SK-N-SH (cell line): ENCODE measurements at regions of chr21 and their contacts with region 1.

Region 1: GRCh38 chr21:37675202-37675801 is 241.0 kb downstream of the KCNJ6 start:
- DNase-seq: peak; percentile 80
- H3K4me3 ChIP-seq: peak overlapping the region in 1 of 2 experiments; percentile 34; a peak in 2 of 4 replicates
- H3K27ac ChIP-seq: no peak overlapping the region
- H3K4me1 ChIP-seq: no peaks in the 10 kb centered on the region; a peak in 1 of 4 replicates
- H3K27me3 ChIP-seq: peaks cover 23% of the 10 kb centered on the region; the same call in 1 of the 2 replicates
- CTCF ChIP-seq: peak; percentile 96
- EP300 ChIP-seq: no peak
- RAD21 ChIP-seq: peak; percentile 65

Region 2: GRCh38 chr21:37658817-37659458 is 16.4 kb before region 1 on chr21:
- CTCF ChIA-PET with region 1: interaction called, 15 read pairs
- POLR2A ChIA-PET with region 1: no interaction called
- DNase-seq: no peak
- H3K4me3 ChIP-seq: no peak overlapping the region
- H3K27ac ChIP-seq: no peak overlapping the region
- H3K4me1 ChIP-seq: no peaks in the 10 kb centered on the region
- H3K27me3 ChIP-seq: peaks cover 9% of the 10 kb centered on the region; the same call in 1 of the 2 replicates
- CTCF ChIP-seq: no peak
- EP300 ChIP-seq: no peak
- RAD21 ChIP-seq: no peak

Region 3: GRCh38 chr21:37695111-37695510 is 19.8 kb after region 1 on chr21:
- CTCF ChIA-PET with region 1: interaction called, 25 read pairs
- POLR2A ChIA-PET with region 1: no interaction called
- DNase-seq: no peak
- H3K4me3 ChIP-seq: no peak overlapping the region
- H3K27ac ChIP-seq: no peak overlapping the region
- H3K4me1 ChIP-seq: no peaks in the 10 kb centered on the region; a peak in 1 of 4 replicates
- H3K27me3 ChIP-seq: peaks cover 17% of the 10 kb centered on the region; the same call in 1 of the 2 replicates
- CTCF ChIP-seq: no peak
- EP300 ChIP-seq: no peak
- RAD21 ChIP-seq: no peak

Region 4: DNA sequence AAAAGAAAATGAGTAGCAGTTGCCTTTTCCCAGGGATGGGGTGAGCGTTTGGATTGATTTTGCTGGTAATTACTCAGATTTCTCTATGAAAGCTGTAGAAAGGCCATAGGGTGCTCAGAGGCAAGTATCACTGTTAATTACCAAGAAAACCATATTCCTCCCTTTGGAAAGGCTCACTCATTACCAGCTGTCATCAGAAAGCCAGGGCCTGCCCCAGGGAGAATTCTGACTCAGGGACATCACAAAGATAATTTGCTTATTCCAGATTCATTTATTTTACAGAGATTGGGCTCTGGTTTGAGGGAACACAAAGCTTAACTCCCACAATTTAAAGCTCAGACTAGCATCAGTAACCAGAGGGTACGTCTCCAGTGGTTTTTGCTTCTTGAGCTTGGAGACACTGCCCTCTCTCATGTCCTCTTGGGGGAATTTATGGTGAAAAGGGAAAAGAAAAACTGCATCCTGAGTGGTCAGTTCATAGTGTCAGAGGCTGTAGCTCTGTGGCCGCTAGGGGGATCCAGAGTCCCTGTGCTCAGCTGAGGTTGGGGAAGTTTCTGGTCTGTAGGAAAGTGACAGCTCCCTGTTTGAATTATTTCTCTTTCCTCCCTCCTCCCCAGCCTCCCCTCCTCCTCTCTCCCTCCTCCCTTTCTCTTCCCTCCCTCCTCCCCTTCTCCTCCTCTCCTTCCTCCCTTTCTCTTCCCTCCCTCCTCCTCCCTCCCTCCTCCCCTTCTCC is 36.7 kb after region 1 on chr21:
- CTCF ChIA-PET with region 1: interaction called, 15 read pairs
- POLR2A ChIA-PET with region 1: no interaction called
- DNase-seq: peak; percentile 64
- H3K4me3 ChIP-seq: no peak overlapping the region; a peak in 1 of 4 replicates
- H3K27ac ChIP-seq: peak overlapping the region in 1 of 2 experiments; percentile 22; a peak in 1 of 4 replicates
- H3K4me1 ChIP-seq: peaks cover 0 to 15% of the 10 kb centered on the region in 2 experiments; a peak in 1 of 4 replicates
- H3K27me3 ChIP-seq: no peaks in the 10 kb centered on the region
- CTCF ChIP-seq: peak; percentile 79
- EP300 ChIP-seq: peak in 1 of 2 experiments; percentile 2; a peak in 1 of 4 replicates
- RAD21 ChIP-seq: peak; percentile 77

Region 5: DNA sequence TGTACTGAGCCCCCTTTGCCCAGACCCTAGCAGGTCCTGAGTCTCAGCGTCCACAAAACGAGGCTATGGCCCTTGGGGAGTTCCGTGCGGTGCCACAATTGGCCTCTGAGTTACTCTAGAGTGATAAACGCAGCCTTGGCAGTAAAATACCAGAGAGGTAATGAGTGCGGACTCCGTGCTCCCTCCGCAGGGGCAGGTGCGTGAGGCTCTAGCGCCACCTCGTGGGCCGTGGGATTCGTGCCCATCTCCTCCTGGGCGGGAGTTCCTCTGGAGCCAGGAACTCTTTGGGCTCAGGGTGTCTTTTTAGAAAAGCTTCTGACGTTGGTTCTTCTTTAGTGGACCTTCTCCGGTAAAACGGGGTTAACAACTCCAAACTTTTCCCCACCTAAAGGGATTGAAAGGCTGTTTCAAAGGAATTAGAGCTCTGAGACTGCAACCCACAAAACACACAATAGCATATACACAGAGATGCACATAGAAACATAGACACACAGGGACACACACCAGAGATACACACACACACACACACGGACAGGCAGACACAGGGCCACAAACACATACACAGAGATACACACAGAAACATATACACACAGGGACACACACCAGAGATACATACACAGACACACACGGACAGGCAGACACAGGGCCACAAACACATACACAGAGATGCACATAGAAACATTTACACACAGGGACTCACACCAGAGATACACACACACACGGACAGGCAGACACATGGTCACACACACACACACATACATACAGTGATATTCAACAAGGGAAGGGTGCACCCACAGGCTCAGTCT is 680.9 kb after region 1 on chr21:
- CTCF ChIA-PET with region 1: interaction called, 10 read pairs
- POLR2A ChIA-PET with region 1: no interaction called
- DNase-seq: peak; percentile 85
- H3K4me3 ChIP-seq: peak overlapping the region in 1 of 2 experiments; percentile 25; a peak in 1 of 4 replicates
- H3K27ac ChIP-seq: no peak overlapping the region
- H3K4me1 ChIP-seq: no peaks in the 10 kb centered on the region; a peak in 1 of 4 replicates
- H3K27me3 ChIP-seq: no peaks in the 10 kb centered on the region
- CTCF ChIP-seq: peak; percentile 97
- EP300 ChIP-seq: no peak
- RAD21 ChIP-seq: peak; percentile 95